Right ventricle myocardium superior (tissue), 1 donor: ENCODE measurements at regions of chr5 and their contacts with region 1.

Region 1: GRCh38 chr5:111158105-111158744 is 66.0 kb upstream of the CAMK4 start:
- DNase-seq: no peak
- ATAC-seq: peak; percentile 67

Region 2: DNA sequence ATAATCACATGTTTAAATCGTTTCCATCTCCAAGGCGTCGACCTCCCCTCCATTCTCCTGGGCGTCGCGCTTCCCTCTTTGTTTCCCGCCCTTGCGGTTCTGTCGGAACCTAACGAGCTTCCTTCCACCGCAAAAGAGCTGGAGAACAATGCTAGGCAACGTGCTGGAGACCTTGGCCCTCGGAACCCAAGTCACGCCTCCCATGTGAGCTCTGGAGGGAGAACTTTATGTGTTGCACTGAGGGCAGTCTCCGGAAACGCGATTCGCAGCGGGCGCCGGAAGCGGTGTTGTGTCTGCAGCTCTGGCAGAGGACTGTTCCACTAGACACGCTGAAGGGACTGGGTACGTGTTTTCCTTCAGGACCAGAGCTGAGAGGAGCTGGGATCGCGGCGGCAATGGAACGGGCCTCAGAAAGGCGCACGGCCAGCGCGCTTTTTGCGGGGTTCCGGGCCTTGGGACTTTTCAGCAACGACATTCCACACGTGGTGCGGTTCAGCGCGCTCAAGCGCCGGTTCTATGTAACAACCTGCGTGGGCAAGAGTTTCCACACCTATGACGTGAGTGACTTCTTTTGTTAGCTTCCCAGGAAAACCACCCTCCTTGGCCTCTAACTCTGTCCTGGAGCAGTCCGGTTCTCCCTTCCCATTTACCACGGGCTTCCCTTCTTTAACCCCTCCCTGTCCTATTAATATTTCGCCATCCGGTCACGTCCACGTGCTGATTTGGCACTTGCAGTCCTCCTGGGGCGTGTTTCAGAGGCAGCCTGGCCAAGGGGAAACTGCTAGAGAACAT is 66.0 kb before region 1 on chr5 and contains the start of gene WDR36:
- intact Hi-C with region 1: no loop called
- DNase-seq: peak; percentile 94
- ATAC-seq: peak; percentile 99
- total RNA-seq, gene WDR36: 12.8 TPM

Region 3: DNA sequence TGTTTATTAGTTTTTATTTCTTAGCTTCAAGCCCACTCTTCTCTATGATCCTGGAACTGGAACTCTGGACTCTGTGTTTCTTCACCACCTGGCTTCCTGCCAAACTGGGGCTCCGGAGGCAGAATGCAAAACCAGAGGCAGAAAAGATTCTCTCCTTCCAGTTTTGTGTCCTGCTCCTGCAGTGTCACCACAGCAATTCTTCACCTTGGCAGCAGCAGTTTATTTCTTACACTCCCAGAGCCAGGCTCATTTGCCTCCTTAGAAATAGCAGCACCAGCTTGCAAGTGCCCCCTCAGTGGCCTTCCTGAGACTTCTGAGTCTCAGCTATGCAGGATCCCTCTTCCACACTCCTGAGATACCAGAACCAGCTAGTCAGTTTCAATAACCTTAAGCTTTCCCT is 39.3 kb after region 1 on chr5:
- intact Hi-C with region 1: no loop called
- DNase-seq: no peak
- ATAC-seq: no peak

Region 4: DNA sequence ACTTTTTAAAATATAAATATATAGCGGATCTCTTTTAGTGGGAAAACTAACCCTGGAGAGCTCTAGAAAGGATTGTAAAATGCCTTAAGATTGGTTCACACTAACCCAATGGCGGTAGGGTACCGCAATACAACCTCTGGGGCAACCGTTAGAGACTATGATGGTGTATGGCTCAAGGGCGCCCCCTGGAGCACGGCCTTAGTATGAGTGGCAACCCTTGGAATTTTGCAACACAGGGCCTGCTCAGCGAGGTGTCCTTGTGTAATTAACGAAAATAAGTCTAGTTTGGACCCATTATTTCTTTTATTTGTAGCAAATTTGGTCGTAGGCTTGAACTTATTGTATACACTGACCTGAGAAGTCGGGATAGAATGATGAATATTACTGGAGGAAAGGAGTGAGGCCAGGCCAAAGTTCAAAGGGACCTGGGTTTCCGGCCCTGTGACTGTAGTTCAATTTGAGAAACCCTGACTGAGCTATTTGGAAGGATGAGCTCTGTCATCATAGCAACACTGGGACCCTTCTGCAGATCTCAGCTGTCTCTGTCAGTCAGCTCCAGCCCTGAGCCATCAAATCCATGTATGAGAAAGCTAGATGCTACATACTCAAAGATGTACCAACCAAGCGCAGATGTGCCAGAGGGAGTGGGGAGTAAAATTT is 120.8 kb after region 1 on chr5:
- intact Hi-C with region 1: loop called (anchors 5 kb)
- DNase-seq: peak; percentile 70
- ATAC-seq: no peak

Region 5: DNA sequence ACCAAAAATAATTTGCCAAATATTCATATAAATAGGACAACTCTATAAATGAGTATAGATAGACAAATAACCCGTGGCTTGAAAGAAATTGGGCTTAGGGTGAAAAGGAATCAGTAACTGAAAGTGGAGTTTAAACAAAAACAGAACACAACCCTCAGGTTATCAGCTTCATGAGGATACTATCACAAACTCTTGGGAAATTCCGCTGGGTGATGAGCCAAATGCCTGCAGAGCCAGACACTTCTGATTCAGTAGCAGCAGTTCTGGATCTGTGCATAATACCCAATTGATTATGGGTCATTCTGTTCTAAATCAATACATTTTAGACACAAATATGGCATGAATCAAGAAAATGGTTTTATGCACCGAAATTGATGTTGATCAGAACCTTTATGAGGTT is 138.3 kb after region 1 on chr5:
- intact Hi-C with region 1: no loop called
- DNase-seq: no peak
- ATAC-seq: no peak